Heart right ventricle (tissue), 16 donors: ENCODE measurements at regions of chr3 and their contacts with region 1.

Region 1: GRCh38 chr3:42556089-42556632 is 25.6 kb downstream of the SEC22C start:
- DNase-seq: no peak
- ATAC-seq: peak in 1 of 8 donors; percentile 17
- H3K4me3 ChIP-seq: no peak overlapping the region
- H3K27ac ChIP-seq: peak overlapping the region in 1 of 10 donors; percentile 37
- H3K4me1 ChIP-seq: peaks cover 0 to 2% (median 0%) of the 10 kb centered on the region in 9 donors
- H3K27me3 ChIP-seq: no peaks in the 10 kb centered on the region
- CTCF ChIP-seq: no peak

Region 2: DNA sequence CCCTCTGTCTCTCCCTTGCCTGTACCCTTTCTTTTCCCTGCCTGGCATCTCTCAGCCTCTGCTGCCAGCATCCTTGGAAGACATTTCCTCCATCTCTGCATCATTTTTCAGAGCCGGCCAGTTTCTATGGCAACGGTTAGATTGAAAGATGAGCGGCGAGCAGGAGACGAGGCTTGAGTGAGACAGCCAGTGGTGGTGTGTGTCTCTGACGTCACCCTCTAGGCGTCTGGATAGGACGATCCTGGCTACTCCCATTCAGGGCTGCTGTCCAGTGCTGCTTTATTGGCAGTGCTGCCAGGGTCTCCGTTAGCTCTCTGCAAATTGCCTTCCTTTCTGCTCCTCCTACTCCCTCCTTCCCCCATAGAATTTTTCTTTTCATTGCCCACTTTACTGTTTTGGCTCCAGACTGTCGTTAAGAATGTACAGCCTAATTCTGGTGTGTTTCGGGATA is 407.2 kb before region 1 on chr3:
- intact Hi-C with region 1: no loop called
- DNase-seq: peak; percentile 67 to 74
- ATAC-seq: peak; percentile 92 to 98 (median 95)
- H3K4me3 ChIP-seq: no peak overlapping the region
- H3K27ac ChIP-seq: no peak overlapping the region
- H3K4me1 ChIP-seq: peaks cover 0 to 69% (median 39%) of the 10 kb centered on the region in 9 donors
- H3K27me3 ChIP-seq: no peaks in the 10 kb centered on the region
- CTCF ChIP-seq: no peak

Region 3: GRCh38 chr3:42247576-42248027 is 308.6 kb before region 1 on chr3:
- intact Hi-C with region 1: loop called in 1 of 10 experiments (anchors 5 kb)
- DNase-seq: peak in 1 of 2 donors; percentile 57
- ATAC-seq: peak in 6 of 8 donors; percentile 29 to 72 (median 50)
- H3K4me3 ChIP-seq: no peak overlapping the region
- H3K27ac ChIP-seq: no peak overlapping the region
- H3K4me1 ChIP-seq: peaks cover 0 to 7% (median 0%) of the 10 kb centered on the region in 9 donors
- H3K27me3 ChIP-seq: peaks cover 0 to 33% (median 15%) of the 10 kb centered on the region in 7 donors
- CTCF ChIP-seq: peak; percentile 44 to 86 (median 76)

Region 4: GRCh38 chr3:42451546-42452230 is 104.5 kb before region 1 on chr3:
- intact Hi-C with region 1: no loop called
- DNase-seq: peak; percentile 16 to 56
- ATAC-seq: peak; percentile 91 to 99 (median 96)
- H3K4me3 ChIP-seq: no peak overlapping the region
- H3K27ac ChIP-seq: peak overlapping the region in 9 of 10 donors; percentile 26 to 87 (median 79)
- H3K4me1 ChIP-seq: peaks cover 0 to 16% (median 13%) of the 10 kb centered on the region in 9 donors
- H3K27me3 ChIP-seq: no peaks in the 10 kb centered on the region
- CTCF ChIP-seq: no peak

Region 5: DNA sequence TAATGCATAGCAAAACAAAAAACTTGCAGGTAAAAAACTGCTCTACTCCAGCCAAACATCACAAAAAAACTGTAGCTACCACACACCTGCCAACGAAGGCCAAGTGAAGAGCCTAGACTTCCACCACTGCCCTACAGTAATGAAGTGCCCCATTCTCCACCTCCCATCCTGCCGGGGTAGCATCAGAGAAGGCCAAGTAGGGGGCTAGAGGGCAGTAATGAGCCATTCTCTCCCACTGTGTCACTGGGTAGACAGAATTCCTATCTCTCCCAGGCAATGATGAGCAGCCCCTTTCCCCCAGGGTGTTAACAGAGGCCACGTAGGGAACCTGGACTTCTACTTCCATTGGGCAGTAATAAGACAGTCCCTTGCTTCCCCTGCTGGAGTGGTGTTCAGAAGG is 16.1 kb after region 1 on chr3:
- intact Hi-C with region 1: loop called in 1 of 10 experiments (anchors 1 kb)
- DNase-seq: peak in 1 of 2 donors; percentile 10
- ATAC-seq: peak; percentile 43 to 87 (median 76)
- H3K4me3 ChIP-seq: no peak overlapping the region
- H3K27ac ChIP-seq: no peak overlapping the region
- H3K4me1 ChIP-seq: peaks cover 0 to 5% (median 0%) of the 10 kb centered on the region in 9 donors
- H3K27me3 ChIP-seq: no peaks in the 10 kb centered on the region
- CTCF ChIP-seq: peak in 7 of 9 donors; percentile 24 to 59 (median 50)

Region 6: DNA sequence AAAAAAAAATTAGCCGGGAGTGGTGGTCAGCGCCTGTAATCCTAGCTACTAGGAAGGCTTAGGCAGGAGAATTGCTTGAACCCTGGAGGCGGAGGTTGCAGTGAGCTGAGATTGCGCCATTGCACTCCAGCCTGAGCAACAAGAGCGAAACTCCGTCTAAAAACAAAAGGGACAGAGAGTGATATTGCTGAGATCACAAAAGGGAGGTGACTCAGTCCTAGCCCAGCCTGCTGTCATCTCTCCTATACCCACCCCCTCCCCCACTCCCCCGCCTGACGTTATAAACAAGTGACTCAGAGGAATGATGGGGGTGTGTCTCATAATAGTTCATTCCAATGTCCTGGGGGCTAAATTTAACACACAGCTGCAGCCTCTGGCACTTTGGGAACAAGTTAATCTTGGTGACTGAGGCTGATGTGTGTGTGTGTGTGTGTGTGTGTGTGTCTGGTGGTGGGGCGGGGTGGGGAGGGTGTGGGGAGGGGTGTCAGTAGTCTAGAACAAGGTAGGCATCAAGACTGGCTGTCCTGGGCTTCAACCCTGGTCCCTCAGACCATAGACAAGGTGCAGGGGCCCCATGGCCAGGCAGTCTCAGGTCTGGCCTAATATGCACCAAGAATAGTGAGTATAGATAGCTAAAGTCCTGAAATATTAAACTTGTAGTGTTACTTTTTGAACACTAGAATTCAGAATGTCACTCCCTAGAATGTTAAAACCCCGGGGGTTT is 127.9 kb after region 1 on chr3:
- intact Hi-C with region 1: no loop called
- DNase-seq: peak in 1 of 2 donors; percentile 85
- ATAC-seq: peak; percentile 80 to 95 (median 92)
- H3K4me3 ChIP-seq: peak overlapping the region in 2 of 10 donors; percentile 5 to 17
- H3K27ac ChIP-seq: peak overlapping the region; percentile 68 to 94 (median 83)
- H3K4me1 ChIP-seq: peaks cover 4 to 40% (median 20%) of the 10 kb centered on the region in 9 donors
- H3K27me3 ChIP-seq: peaks cover 0 to 23% (median 11%) of the 10 kb centered on the region in 7 donors
- CTCF ChIP-seq: no peak

Region 7: GRCh38 chr3:43411429-43411828 is 855.3 kb after region 1 on chr3:
- intact Hi-C with region 1: no loop called
- DNase-seq: no peak
- ATAC-seq: no peak
- H3K4me3 ChIP-seq: no peak overlapping the region
- H3K27ac ChIP-seq: no peak overlapping the region
- H3K4me1 ChIP-seq: peaks cover 0 to 21% (median 4%) of the 10 kb centered on the region in 9 donors
- H3K27me3 ChIP-seq: no peaks in the 10 kb centered on the region
- CTCF ChIP-seq: no peak